Activated CD4-positive, alpha-beta memory T cell treated with anti-CD3 and anti-CD28 coated beads, Interleukin-2, amount 10 ng/mL, durations not matched to agents 7 days and 5 days (primary cell): ENCODE measurements at regions of chr6 and their contacts with region 1.

Region 1: GRCh38 chr6:291697-292505 is at the start of gene DUSP22:
- DNase-seq: peak; percentile 85
- H3K4me3 Mint-ChIP-seq: peak within 1 kb of the TSS; percentile 84
- H3K27ac Mint-ChIP-seq: peak within 1 kb of the TSS; percentile 94
- H3K4me1 Mint-ChIP-seq: peaks cover 48% of the 10 kb centered on the region
- H3K27me3 Mint-ChIP-seq: peaks cover 4% of the 10 kb centered on the region
- total RNA-seq, gene DUSP22: 36.3 to 41.5 TPM

Region 2: GRCh38 chr6:217048-217659 is 74.7 kb before region 1 on chr6:
- CTCF ChIA-PET with region 1: interaction called, 11 read pairs
- POLR2A ChIA-PET with region 1: interaction called, 18 read pairs
- DNase-seq: no peak
- H3K4me3 Mint-ChIP-seq: no peak overlapping the region
- H3K27ac Mint-ChIP-seq: peak overlapping the region; percentile 11
- H3K4me1 Mint-ChIP-seq: peaks cover 65% of the 10 kb centered on the region
- H3K27me3 Mint-ChIP-seq: peaks cover 12% of the 10 kb centered on the region

Region 3: DNA sequence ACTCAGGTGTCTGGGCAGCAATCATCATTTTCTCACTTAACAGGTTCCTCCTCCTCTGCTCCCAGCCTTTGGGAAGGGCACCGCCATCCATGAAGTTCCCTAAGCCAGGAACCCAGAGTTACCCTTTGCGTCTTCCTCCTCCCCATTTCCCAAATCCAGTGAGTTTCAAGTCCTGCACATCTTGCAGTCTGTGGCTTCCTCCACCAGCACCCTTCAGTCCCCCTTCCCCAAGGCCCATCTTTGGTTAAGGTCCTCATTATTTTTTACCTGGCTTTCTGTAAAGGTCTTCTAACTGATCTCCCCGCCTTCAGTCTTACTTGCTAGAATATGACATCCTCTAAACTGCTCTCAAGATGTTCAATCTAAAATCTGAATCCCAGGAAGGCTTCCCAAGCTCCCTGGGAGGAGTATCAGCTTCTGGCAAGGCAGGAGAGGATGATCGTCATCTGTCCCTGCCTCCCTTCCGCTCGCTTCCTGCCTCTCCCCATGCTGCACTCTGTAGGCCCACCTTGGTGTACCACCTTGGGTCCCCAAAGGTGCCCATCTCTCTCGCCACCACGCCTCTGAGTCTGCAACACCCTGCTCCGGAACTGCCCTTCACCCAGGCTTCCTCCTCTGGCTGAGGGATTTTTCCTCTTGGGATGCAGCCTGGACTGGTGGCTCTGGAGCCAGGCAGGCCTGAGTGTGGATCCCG is 11.0 kb before region 1 on chr6:
- CTCF ChIA-PET with region 1: no interaction called
- POLR2A ChIA-PET with region 1: no interaction called
- DNase-seq: no peak
- H3K4me3 Mint-ChIP-seq: no peak overlapping the region
- H3K27ac Mint-ChIP-seq: no peak overlapping the region
- H3K4me1 Mint-ChIP-seq: peaks cover 9% of the 10 kb centered on the region
- H3K27me3 Mint-ChIP-seq: peaks cover 9% of the 10 kb centered on the region

Region 4: DNA sequence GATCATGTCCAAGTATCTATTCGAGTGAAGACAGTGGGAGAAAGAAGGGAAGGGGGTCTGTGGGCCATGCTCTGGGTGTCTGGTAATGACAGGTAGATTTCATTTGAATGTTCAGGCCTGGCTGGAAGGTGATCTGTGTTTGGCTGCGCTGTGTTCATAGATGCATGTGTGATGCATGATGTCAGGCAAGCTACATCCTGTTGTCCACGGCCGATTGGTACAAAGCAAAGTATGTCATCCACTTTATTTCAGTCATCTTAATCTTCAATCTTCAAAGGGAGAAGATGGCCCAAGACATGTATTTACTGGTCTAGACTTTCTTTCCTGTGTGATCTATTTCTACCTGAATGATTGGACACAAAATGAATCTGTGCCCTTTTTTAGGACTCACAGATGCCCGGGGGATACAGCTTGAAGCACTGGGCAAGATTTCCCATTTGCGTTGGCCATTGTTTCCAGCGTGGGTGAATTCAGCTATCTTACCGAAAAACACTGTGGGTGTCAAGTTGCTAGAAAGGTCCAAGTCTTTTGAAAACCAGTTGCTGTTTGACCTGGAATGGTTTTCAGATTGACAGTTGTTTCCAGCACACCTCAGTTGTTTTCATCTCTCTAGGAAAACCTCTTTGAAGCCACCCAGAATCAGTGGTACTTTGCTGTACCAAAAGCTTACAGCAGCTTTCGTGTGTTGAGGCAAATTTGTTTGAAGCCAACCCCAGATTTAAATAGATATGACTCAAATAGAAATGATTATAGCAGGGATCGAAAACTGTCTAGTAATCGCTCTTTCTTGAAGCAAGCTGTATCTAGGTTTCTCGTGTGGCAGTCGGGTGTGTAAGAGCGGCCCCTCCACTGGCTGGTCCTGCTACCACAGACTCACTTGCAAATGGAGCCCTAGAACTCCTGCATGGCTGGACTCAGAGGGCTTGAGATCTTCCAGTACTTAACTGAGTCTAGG is 27.6 kb after region 1 on chr6:
- CTCF ChIA-PET with region 1: interaction called, 3 read pairs
- POLR2A ChIA-PET with region 1: interaction called, 11 read pairs
- DNase-seq: no peak
- H3K4me3 Mint-ChIP-seq: no peak overlapping the region
- H3K27ac Mint-ChIP-seq: peak overlapping the region; percentile 51
- H3K4me1 Mint-ChIP-seq: peaks cover 23% of the 10 kb centered on the region
- H3K27me3 Mint-ChIP-seq: peaks cover 2% of the 10 kb centered on the region

Region 5: GRCh38 chr6:336159-337019 is 44.5 kb after region 1 on chr6:
- CTCF ChIA-PET with region 1: interaction called, 4 read pairs
- POLR2A ChIA-PET with region 1: interaction called, 21 read pairs
- DNase-seq: peak; percentile 29
- H3K4me3 Mint-ChIP-seq: no peak overlapping the region
- H3K27ac Mint-ChIP-seq: peak overlapping the region; percentile 71
- H3K4me1 Mint-ChIP-seq: peaks cover 55% of the 10 kb centered on the region
- H3K27me3 Mint-ChIP-seq: no peaks in the 10 kb centered on the region

Region 6: GRCh38 chr6:753486-753885 is 461.6 kb after region 1 on chr6:
- CTCF ChIA-PET with region 1: no interaction called
- POLR2A ChIA-PET with region 1: no interaction called
- DNase-seq: no peak
- H3K4me3 Mint-ChIP-seq: no peak overlapping the region
- H3K27ac Mint-ChIP-seq: no peak overlapping the region
- H3K4me1 Mint-ChIP-seq: no peaks in the 10 kb centered on the region
- H3K27me3 Mint-ChIP-seq: no peaks in the 10 kb centered on the region